Activated B cell treated with CpG ODN at 0.5 μM for 24 hours (primary cell): ENCODE measurements at regions of chr9 and their contacts with region 1.

Region 1: DNA sequence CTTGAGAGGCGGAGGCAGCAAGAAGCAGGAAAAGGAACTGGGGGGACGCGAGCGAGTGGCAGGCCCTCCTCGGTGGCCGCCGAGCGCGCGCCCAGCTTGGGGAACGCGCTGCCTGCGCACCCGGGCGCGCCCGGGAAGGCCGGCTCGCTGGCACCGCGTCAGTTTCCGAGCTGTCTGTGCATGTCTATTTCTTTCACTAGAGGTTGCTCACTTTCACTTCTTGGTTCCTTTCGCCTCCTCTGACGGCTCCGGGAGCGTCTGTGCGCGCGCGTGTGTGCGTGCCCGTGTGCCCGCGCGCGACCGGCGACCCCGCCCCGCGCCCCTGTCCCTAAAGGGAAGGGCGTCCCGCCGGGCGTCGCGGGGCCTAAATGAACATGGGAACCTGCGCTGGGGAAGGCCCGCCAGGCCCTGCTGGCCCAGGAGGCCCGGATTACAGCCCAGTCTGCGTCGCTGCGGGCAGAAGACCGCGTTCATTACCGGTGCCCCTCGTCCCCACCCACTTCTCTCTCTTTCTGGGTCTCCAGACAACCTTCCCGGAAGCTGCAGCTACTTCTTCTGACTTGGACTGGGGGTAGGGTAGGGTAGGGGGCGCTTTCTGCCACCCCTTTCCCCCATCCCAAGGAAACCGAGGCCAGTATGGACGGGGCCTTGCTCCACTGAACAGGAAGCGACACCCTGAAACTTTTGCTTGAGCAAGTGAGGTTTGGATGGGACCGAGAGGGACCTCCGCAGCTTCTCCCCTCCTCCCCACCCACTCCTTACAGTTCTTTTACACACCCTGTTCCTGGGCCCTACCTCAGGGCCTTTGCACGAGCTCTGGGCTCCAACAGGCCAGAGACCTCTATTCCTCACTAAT is 205.7 kb upstream of the IER5L start:
- DNase-seq: peak; percentile 82
- ATAC-seq: peak; percentile 91
- H3K4me3 Mint-ChIP-seq: peak overlapping the region; percentile 80
- H3K27ac Mint-ChIP-seq: peak overlapping the region; percentile 90
- H3K4me1 Mint-ChIP-seq: peaks cover 24% of the 10 kb centered on the region
- H3K27me3 Mint-ChIP-seq: peaks cover 4% of the 10 kb centered on the region
- CTCF ChIP-seq: no peak

Region 2: DNA sequence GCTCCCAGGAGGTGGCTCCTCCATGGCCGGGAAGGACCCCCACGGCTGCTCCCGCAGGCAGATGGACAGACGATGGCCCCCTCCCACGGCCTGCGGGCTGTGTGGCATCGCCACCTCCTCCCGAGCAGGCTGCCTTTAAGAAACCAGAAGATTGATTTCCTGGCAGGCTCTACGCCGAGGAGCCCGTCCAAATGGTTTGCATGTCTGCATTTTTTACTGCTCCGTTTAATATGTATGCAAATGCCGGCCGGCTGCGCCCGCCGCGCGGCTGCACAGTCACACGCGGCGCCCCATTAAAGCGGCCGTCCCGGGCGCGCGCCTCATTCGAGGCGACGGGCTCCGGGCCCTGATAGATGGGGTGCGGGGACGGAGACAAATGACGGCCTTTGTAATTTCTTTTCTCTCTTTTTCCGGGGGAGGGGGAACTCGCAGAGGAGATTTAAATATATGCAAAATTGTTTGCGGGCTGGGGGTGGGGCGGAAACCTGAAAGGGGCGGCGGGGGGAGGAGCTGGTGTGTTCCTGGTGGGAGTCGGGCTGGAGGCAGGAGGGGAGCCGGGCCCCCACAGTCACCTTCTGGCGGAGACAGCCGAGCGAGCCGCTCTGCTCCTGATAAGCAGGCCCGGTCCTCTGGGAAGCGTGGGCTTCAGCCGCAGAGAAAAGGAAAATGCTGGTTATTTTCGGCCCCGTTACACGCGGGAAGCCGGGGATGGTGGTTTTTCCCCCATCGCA is 47.0 kb before region 1 on chr9:
- CTCF ChIA-PET with region 1: no interaction called
- POLR2A ChIA-PET with region 1: no interaction called
- intact Hi-C with region 1: loop called (anchors 5 kb)
- DNase-seq: peak; percentile 33
- ATAC-seq: peak; percentile 78
- H3K4me3 Mint-ChIP-seq: peak overlapping the region; percentile 75
- H3K27ac Mint-ChIP-seq: no peak overlapping the region
- H3K4me1 Mint-ChIP-seq: peaks cover 22% of the 10 kb centered on the region
- H3K27me3 Mint-ChIP-seq: peaks cover 33% of the 10 kb centered on the region
- CTCF ChIP-seq: no peak

Region 3: GRCh38 chr9:129362287-129363000 is 21.3 kb before region 1 on chr9:
- CTCF ChIA-PET with region 1: no interaction called
- POLR2A ChIA-PET with region 1: no interaction called
- intact Hi-C with region 1: no loop called
- DNase-seq: no peak
- ATAC-seq: no peak
- H3K4me3 Mint-ChIP-seq: no peak overlapping the region
- H3K27ac Mint-ChIP-seq: no peak overlapping the region
- H3K4me1 Mint-ChIP-seq: peaks cover 5% of the 10 kb centered on the region
- H3K27me3 Mint-ChIP-seq: peaks cover 14% of the 10 kb centered on the region
- CTCF ChIP-seq: no peak

Region 4: GRCh38 chr9:129413537-129414376 is 30.0 kb after region 1 on chr9:
- CTCF ChIA-PET with region 1: no interaction called
- POLR2A ChIA-PET with region 1: interaction called, 30 read pairs
- intact Hi-C with region 1: loop called (anchors 1 kb)
- DNase-seq: peak; percentile 99
- ATAC-seq: peak; percentile 79
- H3K4me3 Mint-ChIP-seq: peak overlapping the region; percentile 85
- H3K27ac Mint-ChIP-seq: peak overlapping the region; percentile 97
- H3K4me1 Mint-ChIP-seq: peaks cover 14% of the 10 kb centered on the region
- H3K27me3 Mint-ChIP-seq: no peaks in the 10 kb centered on the region
- CTCF ChIP-seq: no peak

Region 5: DNA sequence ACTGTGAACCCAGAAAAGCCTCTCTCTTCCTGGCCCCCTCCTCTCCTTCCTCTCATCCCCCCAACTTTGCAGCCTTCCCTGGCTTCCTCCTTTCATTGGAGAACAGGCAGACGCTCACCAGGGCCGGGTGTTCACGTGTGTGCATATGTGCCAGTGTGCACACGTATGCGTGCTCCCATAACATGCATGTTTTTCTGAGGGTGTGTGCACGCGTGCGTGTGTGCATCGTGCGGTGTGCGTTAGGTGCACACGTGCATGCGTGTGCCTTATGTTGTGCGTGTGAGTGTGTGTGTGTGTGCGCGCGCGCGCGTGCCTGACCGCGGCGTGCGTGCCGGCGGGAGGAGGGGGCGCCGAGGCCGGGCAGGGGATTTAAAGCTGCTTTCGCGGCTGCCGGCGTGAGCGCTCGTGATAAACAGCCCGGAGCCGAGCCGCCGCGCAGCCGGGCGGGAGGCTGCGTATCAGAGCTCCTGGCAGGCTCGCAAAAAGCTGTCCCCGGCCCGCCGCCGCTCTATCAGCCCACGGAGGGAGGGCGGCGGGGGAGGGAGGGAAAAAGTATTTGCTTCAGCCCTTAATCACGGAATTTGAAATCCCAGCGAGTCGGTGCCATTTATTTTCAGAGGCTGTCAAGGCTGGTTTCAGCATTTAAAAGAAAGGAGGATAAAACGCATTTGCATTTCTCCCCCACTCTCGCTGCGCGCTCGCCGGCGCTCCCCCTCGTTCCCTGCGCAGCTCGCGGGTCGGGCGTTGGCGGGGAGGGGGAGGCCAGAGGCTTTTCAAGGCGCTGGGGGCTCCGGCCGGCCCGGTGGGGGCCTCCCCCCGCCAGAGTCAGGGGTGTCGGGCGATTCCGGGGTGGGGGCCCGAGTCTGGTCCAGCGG is 53.2 kb after region 1 on chr9:
- CTCF ChIA-PET with region 1: no interaction called
- POLR2A ChIA-PET with region 1: no interaction called
- intact Hi-C with region 1: loop called (anchors 2 kb)
- DNase-seq: no peak
- ATAC-seq: no peak
- H3K4me3 Mint-ChIP-seq: peak overlapping the region; percentile 74
- H3K27ac Mint-ChIP-seq: peak overlapping the region; percentile 50
- H3K4me1 Mint-ChIP-seq: peaks cover 22% of the 10 kb centered on the region
- H3K27me3 Mint-ChIP-seq: peaks cover 55% of the 10 kb centered on the region
- CTCF ChIP-seq: no peak

Region 6: DNA sequence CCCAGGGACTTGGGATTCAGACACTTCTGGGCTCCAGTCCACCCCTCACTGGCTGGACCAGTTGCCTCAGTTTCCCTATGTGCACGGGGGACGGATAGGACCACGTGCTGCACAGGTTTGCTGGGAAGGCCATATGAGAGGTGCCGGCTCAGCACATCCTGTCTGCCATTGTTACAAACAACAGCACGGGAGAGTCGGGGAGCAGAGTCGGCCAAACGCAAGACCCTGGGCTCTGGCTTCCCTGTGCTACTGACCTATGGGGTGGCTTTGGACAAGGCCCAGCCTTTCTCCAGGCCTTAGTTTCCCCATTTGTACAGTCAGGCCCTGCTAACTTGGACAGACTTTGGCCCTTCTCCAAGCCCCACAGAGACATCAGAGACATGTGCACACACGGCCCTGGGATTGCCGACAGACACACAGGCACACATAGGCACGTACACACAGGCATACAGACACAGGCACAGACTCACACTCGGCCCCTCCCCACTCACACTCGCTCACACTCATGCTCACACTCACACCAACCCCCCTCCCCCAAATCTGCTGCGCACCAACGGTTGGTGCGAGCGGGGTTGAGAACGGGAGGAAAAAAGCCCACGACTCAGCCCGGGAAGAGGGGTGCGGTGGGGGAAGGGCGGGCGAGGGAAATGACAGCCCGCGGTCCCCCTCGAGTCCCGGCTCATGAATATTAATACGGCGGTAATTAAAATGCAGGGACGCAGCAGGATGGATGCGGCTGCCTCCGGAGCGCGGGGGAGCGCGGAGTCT is 104.0 kb after region 1 on chr9:
- CTCF ChIA-PET with region 1: no interaction called
- POLR2A ChIA-PET with region 1: no interaction called
- intact Hi-C with region 1: loop called (anchors 2 kb)
- DNase-seq: no peak
- ATAC-seq: peak; percentile 12
- H3K4me3 Mint-ChIP-seq: peak overlapping the region; percentile 81
- H3K27ac Mint-ChIP-seq: peak overlapping the region; percentile 88
- H3K4me1 Mint-ChIP-seq: peaks cover 39% of the 10 kb centered on the region
- H3K27me3 Mint-ChIP-seq: peaks cover 11% of the 10 kb centered on the region
- CTCF ChIP-seq: no peak

Region 7: GRCh38 chr9:129495534-129496325 is 111.9 kb after region 1 on chr9:
- CTCF ChIA-PET with region 1: no interaction called
- POLR2A ChIA-PET with region 1: interaction called, 15 read pairs
- intact Hi-C with region 1: loop called (anchors 1 kb)
- DNase-seq: peak; percentile 66
- ATAC-seq: peak; percentile 80
- H3K4me3 Mint-ChIP-seq: peak overlapping the region; percentile 78
- H3K27ac Mint-ChIP-seq: no peak overlapping the region
- H3K4me1 Mint-ChIP-seq: peaks cover 17% of the 10 kb centered on the region
- H3K27me3 Mint-ChIP-seq: peaks cover 22% of the 10 kb centered on the region
- CTCF ChIP-seq: no peak

Region 8: DNA sequence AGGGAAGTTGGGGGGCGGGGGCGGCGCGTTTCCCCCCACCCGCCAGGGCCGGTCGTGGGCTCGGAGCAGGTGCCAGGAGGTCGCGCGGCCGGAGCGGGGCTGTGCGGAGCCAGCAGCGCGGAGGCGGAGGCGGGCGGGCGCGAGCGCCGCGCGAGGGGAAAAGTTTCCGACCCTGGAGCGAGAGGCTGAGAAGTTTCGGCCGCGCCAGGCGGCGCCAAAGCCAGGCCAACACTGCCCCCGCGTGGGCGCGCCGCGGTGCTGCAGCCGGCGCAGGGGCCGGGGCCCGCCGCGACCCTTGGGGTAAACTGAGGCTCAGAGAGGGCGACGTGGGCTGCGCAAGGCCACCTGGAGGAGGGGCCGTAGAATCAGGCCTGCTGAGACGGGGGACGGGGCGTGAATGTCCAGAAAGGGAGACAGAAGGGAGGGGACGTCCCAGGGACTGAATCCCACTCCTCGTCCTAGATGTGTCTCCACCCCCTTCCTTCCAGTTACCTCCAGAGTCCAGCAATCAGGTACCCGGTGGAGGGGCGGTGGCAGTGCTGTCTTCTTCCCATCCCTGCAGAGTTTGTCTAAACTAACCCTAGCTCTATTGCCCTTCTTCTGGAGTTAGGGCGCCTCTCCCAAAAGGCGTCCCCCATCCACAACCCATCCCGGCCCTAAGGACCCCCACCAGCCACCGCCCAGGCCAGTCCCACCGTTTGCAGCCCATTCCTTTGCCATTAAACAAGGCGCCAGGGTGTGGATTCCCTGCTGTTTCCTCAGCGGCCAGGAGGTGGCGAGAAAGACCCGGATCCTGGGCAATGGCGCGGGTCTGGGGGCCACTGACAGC is 226.9 kb after region 1 on chr9:
- CTCF ChIA-PET with region 1: no interaction called
- POLR2A ChIA-PET with region 1: interaction called, 3 read pairs
- intact Hi-C with region 1: loop called (anchors 5 kb)
- DNase-seq: peak; percentile 75
- ATAC-seq: peak; percentile 82
- H3K4me3 Mint-ChIP-seq: peak overlapping the region; percentile 81
- H3K27ac Mint-ChIP-seq: peak overlapping the region; percentile 41
- H3K4me1 Mint-ChIP-seq: peaks cover 24% of the 10 kb centered on the region
- H3K27me3 Mint-ChIP-seq: peaks cover 2% of the 10 kb centered on the region
- CTCF ChIP-seq: peak; percentile 37